ENCODE measurements at regions of chr3 and their contacts with region 1.

Region 1: DNA sequence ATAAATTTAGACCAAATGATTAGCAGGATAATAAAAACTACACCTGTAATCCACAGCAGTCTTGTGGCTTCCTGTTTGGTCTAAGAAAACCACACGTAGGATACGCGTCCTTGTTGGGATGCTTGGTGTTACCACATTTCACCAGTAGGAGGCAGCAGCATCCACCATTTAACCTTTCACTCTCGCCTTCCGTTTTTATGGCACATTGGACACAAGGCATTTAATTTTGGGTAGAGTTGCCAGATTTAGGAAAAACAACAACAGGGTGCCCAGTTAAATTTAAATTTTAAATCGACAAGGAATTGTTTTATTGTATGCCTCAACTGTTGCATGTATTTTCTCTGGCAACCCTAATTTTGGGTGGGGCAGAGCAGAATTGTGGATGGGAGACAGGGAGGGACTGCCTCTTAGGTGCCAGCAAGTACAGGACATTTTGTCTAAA is 6.3 kb downstream of the LRRC31 start:
- DNase-seq: peak; percentile 78
- ATAC-seq: peak; percentile 56
- H3K4me3 Mint-ChIP-seq: no peak overlapping the region
- H3K27ac Mint-ChIP-seq: no peak overlapping the region
- H3K4me1 Mint-ChIP-seq: peaks cover 19% of the 10 kb centered on the region
- H3K27me3 Mint-ChIP-seq: peaks cover 6% of the 10 kb centered on the region
- CTCF ChIP-seq: peak; percentile 95

Region 2: DNA sequence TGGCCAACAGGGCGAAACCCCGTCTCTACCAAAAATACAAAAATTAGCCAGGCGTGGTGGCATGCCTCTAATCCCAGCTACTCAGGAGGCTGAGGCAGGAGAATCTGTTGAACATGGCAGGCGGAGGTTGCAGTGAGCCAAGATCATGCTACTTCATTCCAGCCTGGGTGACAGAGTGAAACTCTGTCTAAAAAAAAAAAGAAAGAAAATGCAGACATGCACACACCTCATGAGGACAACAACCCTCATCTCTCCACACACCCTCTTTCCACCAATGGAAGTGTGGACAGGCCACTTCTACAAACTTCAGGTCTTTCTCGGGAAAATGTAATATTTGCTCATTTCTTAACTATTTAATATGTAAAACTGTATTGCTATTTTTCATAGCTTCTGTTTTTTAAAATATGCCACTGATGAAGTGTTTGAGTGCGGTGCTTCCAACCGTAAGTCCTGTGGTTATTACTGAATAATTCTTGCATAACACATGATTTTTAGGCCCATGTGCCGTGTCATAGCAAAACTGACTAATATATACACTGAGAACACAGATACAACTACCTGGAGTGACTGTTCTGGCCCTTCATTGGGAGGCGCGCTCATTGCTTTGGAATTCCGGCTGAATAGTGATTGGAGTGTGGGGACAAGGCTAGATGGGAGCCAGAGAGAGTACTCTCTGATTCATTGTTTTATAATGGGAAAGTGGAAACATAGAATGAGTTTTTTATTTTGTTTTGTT is 16.9 kb before region 1 on chr3:
- CTCF ChIA-PET with region 1: interaction called, 16 read pairs
- POLR2A ChIA-PET with region 1: no interaction called
- intact Hi-C with region 1: no loop called
- DNase-seq: no peak
- ATAC-seq: no peak
- H3K4me3 Mint-ChIP-seq: no peak overlapping the region
- H3K27ac Mint-ChIP-seq: no peak overlapping the region
- H3K4me1 Mint-ChIP-seq: no peaks in the 10 kb centered on the region
- H3K27me3 Mint-ChIP-seq: peaks cover 3% of the 10 kb centered on the region
- CTCF ChIP-seq: no peak

Region 3: GRCh38 chr3:169923189-169923588 is 59.7 kb after region 1 on chr3:
- CTCF ChIA-PET with region 1: no interaction called
- POLR2A ChIA-PET with region 1: no interaction called
- intact Hi-C with region 1: no loop called
- DNase-seq: no peak
- ATAC-seq: no peak
- H3K4me3 Mint-ChIP-seq: no peak overlapping the region
- H3K27ac Mint-ChIP-seq: no peak overlapping the region
- H3K4me1 Mint-ChIP-seq: no peaks in the 10 kb centered on the region
- H3K27me3 Mint-ChIP-seq: peaks cover 2% of the 10 kb centered on the region
- CTCF ChIP-seq: no peak

Region 4: GRCh38 chr3:170021083-170021482 is 157.6 kb after region 1 on chr3:
- CTCF ChIA-PET with region 1: interaction called, 12 read pairs
- POLR2A ChIA-PET with region 1: no interaction called
- intact Hi-C with region 1: no loop called
- DNase-seq: no peak
- ATAC-seq: peak; percentile 64
- H3K4me3 Mint-ChIP-seq: no peak overlapping the region
- H3K27ac Mint-ChIP-seq: no peak overlapping the region
- H3K4me1 Mint-ChIP-seq: peaks cover 2% of the 10 kb centered on the region
- H3K27me3 Mint-ChIP-seq: no peaks in the 10 kb centered on the region
- CTCF ChIP-seq: peak; percentile 41

Region 5: DNA sequence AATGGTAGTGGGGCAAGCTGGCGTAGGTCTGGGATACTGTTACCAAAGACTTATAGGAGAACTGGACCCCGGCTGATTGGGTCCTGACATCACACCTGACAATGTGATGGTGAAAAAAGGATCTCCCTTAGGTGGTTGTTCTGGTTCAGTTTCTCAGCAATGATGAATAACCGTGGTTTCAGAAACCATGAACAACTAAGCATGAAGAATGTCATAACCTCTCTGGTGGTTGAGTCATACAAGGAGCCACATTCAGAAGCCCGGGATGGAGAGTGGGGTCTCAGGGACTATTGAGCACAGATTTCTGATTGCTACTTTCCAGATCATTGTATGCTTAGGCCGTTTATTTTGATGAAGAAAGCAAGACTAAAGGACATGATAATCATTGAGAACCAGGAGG is 191.7 kb after region 1 on chr3:
- CTCF ChIA-PET with region 1: interaction called, 12 read pairs
- POLR2A ChIA-PET with region 1: no interaction called
- intact Hi-C with region 1: loop called (anchors 10 kb)
- DNase-seq: peak; percentile 51
- ATAC-seq: peak; percentile 72
- H3K4me3 Mint-ChIP-seq: no peak overlapping the region
- H3K27ac Mint-ChIP-seq: no peak overlapping the region
- H3K4me1 Mint-ChIP-seq: peaks cover 33% of the 10 kb centered on the region
- H3K27me3 Mint-ChIP-seq: no peaks in the 10 kb centered on the region
- CTCF ChIP-seq: no peak

Measured in activated CD8-positive, alpha-beta T cell treated with anti-CD3 and anti-CD28 coated beads for 36 hours (primary cell).